ENCODE measurements at regions of chr4 and their contacts with region 1.

Region 1: GRCh38 chr4:76055016-76055415 is 19.1 kb upstream of the CXCL11 start:
- DNase-seq: peak; percentile 9
- H3K4me3 Mint-ChIP-seq: peak overlapping the region; percentile 23
- H3K27ac Mint-ChIP-seq: peak overlapping the region; percentile 52
- H3K4me1 Mint-ChIP-seq: peaks cover 57% of the 10 kb centered on the region
- H3K27me3 Mint-ChIP-seq: no peaks in the 10 kb centered on the region

Region 2: GRCh38 chr4:75514131-75514948 is 540.7 kb before region 1 on chr4 and contains the starts of genes RCHY1 and THAP6:
- intact Hi-C with region 1: loop called (anchors 10 kb)
- DNase-seq: peak; percentile 90
- H3K4me3 Mint-ChIP-seq: no peak within 1 kb of the TSS
- H3K27ac Mint-ChIP-seq: peak within 1 kb of the TSS; percentile 100
- H3K4me1 Mint-ChIP-seq: peaks cover 47% of the 10 kb centered on the region
- H3K27me3 Mint-ChIP-seq: no peaks in the 10 kb centered on the region
- total RNA-seq, gene RCHY1: 25.0 and 25.6 TPM in 2 replicates
- total RNA-seq, gene THAP6: 16.3 and 17.3 TPM in 2 replicates

Region 3: GRCh38 chr4:75653845-75654503 is 401.0 kb before region 1 on chr4:
- intact Hi-C with region 1: loop called (anchors 10 kb)
- DNase-seq: no peak
- H3K4me3 Mint-ChIP-seq: peak overlapping the region; percentile 41
- H3K27ac Mint-ChIP-seq: peak overlapping the region; percentile 93
- H3K4me1 Mint-ChIP-seq: peaks cover 50% of the 10 kb centered on the region
- H3K27me3 Mint-ChIP-seq: no peaks in the 10 kb centered on the region

Region 4: DNA sequence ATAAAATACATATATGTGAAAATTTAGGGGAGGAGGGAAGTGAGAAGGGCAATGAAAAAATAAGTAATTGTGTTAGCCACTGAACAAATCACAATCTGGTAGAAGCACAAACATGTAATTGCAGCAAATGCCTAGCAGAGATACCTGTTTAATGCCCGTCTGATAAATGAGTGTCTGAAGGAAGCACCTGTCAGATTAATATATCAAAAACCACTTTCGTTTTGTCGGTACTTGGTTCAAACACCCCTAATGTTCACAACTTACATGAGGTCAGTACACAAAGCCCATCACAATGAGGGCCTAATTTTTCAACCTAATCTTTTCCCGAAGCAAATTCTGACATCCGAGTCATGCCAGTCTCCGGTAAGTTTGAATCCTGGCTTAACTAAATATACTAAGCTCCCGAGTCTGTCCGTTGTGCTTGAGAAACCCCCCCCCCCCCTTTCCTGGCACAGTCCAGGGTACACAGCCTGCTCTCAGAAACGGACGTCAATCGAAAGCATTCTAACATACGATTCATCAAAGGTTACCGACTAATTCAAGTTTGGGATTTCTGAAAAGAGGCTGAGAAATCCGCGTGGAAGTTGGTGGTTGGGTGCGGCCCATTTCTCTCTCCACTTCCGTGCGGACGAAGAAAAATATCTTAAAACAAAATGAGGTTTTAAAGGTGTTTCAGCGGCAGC is 65.0 kb before region 1 on chr4:
- intact Hi-C with region 1: loop called (anchors 1 kb)
- DNase-seq: no peak
- H3K4me3 Mint-ChIP-seq: peak overlapping the region; percentile 93
- H3K27ac Mint-ChIP-seq: peak overlapping the region; percentile 83
- H3K4me1 Mint-ChIP-seq: peaks cover 27% of the 10 kb centered on the region
- H3K27me3 Mint-ChIP-seq: no peaks in the 10 kb centered on the region

Region 5: DNA sequence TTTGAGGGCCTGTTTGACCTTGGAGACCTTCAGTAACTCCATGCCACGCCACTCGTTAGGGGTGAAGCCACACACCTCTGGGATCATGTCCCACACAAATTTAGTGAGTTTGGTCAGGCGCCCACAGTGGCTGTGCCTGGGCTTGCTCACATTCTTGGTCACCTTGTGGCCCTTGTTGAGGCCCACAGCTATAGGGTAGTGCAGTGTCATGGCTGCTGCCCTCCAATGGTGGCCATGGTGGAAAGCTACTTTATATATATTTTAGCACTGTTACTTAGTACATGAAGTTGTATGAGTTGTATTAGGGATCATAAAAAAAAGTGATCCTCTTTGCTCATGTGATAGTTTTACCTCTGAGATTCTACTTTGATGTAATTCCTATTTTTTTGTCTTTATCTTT is 18.2 kb before region 1 on chr4:
- intact Hi-C with region 1: loop called (anchors 1 kb)
- DNase-seq: no peak
- H3K4me3 Mint-ChIP-seq: no peak overlapping the region
- H3K27ac Mint-ChIP-seq: no peak overlapping the region
- H3K4me1 Mint-ChIP-seq: peaks cover 21% of the 10 kb centered on the region
- H3K27me3 Mint-ChIP-seq: no peaks in the 10 kb centered on the region

Region 6: DNA sequence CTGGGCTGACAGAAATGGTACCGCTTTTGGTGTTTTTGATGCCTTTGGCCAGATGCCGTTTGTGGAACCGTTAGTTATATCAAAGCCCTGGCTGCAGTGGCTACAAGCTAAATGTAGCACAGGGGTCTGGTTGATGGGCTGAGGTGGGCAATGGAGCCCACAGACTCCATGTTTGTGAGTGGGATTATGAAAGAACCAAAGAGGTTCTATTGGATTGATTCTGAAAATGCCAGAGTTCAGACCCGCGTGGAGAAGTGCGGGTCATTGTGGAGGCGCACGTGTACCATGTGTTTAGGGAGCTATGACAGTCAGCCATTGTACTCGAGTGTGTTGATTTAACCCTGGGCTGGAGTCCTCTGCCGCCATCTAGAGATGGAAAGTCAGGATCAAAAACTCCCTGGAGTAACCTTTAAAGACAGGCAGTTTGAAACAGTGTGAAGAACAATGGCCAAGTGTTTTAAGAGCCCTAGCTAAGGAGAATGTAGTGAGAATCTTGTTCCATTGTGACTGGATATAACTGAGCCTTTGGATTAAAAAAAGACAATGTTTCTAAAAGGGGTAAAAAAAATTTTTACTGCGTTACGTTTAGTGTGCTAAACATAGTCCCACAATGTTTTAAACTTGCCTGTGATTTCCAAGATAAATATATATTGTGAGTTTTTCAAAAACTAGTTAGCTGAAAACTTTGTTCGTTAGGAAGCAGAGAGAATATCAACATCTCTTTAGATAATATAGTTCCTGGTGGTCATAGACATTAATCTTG is 32.2 kb after region 1 on chr4:
- intact Hi-C with region 1: no loop called
- DNase-seq: no peak
- H3K4me3 Mint-ChIP-seq: no peak overlapping the region
- H3K27ac Mint-ChIP-seq: no peak overlapping the region
- H3K4me1 Mint-ChIP-seq: peaks cover 5% of the 10 kb centered on the region
- H3K27me3 Mint-ChIP-seq: peaks cover 4% of the 10 kb centered on the region

Region 7: DNA sequence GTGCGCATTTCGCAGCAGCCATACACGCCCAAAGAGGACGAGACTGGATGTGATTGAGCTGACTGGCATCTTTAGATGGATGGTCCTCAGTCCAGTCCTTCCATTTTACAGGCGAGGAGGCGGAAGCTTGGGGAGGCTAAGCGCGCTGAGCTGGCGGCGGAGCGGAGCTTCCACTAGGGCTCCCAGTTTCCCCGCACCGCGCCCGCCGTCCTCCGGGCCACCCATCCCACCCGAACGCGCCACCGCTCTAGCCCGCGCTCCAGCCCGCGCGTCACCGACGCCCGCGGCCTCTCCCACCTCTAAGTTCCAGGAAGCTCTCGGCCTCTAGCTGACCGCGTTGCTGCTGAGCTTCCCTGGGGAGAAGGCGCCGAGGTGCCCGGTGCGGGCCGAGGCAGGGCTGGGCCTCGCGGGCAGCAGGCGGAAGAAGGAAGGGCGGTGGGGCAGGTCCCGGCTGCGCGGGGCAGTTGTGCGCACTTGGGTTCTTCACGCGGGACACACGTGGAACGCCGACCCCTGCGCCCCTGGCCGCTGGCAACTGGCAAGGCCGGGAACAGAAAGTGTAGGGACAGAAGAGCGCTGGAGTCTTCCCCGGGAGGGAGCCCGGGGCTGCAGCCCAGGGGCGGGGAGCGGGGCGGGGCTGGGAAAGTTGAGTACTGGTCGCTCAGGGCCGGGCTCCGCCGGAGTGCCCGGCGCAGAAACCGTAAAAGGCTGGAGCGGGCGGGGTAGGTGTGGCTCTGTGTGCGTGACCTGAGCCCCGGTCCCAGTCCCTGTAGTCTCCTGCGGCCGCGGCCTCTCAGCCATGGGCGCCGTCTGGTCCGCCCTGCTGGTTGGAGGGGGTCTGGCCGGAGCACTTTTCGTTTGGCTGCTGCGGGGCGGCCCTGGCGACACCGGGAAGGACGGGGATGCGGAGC is 251.2 kb after region 1 on chr4 and contains the start of gene STBD1:
- intact Hi-C with region 1: loop called (anchors 2 kb)
- DNase-seq: peak; percentile 24
- H3K4me3 Mint-ChIP-seq: peak within 1 kb of the TSS; percentile 68
- H3K27ac Mint-ChIP-seq: peak within 1 kb of the TSS; percentile 24
- H3K4me1 Mint-ChIP-seq: peaks cover 48% of the 10 kb centered on the region
- H3K27me3 Mint-ChIP-seq: peaks cover 16% of the 10 kb centered on the region
- total RNA-seq, gene STBD1: 0.51 and 0.57 TPM in 2 replicates

Region 8: GRCh38 chr4:77862478-77863216 is 1807.6 kb after region 1 on chr4 and contains the start of gene MRPL1:
- intact Hi-C with region 1: loop called (anchors 5 kb)
- DNase-seq: peak; percentile 84
- H3K4me3 Mint-ChIP-seq: peak within 1 kb of the TSS; percentile 90
- H3K27ac Mint-ChIP-seq: peak within 1 kb of the TSS; percentile 94
- H3K4me1 Mint-ChIP-seq: peaks cover 48% of the 10 kb centered on the region
- H3K27me3 Mint-ChIP-seq: no peaks in the 10 kb centered on the region
- total RNA-seq, gene MRPL1: 72.7 and 75.0 TPM in 2 replicates